OCI-LY7 (cell line): ENCODE measurements at regions of chr14 and their contacts with region 1.

Region 1: GRCh38 chr14:101843665-101844064 is 82.2 kb downstream of the PPP2R5C start:
- DNase-seq: peak; percentile 93
- H3K4me3 ChIP-seq: peak overlapping the region; percentile 38
- H3K27ac ChIP-seq: peak overlapping the region; percentile 63
- H3K4me1 ChIP-seq: peaks cover 89% of the 10 kb centered on the region
- CTCF ChIP-seq: peak; percentile 97

Region 2: DNA sequence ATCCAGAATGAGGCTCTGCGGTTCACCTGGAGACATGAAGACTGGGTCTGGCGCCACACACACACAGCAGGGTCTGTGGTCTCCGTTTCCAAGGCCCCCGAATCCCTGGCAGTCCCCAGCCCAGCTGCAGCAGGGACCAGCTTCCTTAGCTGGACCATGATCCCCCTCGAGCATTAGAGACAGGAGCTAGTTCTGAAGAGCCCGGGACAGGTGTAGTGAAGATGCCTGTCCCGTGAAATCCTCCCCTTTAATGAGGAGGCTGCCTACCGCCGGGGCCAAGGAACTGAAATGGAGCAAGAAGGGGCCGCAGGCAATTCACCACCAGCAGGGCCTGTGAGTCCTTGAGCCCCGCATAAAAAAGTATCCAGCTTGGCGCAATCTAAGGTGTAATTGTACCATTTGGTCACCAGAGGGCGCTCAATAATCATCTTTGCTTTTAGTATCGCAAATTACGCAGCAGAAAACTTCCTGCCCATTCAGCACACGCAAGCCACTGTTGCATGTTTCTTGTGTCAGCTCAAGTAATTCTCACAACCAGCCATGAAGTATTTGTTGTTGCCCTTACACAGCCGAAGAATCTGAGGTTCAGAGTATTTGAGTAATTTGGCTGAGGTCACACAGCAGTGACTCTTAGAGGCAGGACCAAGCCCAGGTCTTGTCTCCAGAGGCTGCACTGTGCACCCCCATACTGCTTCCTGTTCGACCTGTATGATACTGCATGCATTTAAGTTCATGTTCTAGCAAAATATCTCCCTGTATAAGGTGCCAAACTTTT is 136.4 kb before region 1 on chr14:
- CTCF ChIA-PET with region 1: no interaction called
- POLR2A ChIA-PET with region 1: no interaction called
- intact Hi-C with region 1: loop called (anchors 1 kb)
- DNase-seq: peak; percentile 83
- H3K4me3 ChIP-seq: no peak overlapping the region
- H3K27ac ChIP-seq: no peak overlapping the region
- H3K4me1 ChIP-seq: peaks cover 6% of the 10 kb centered on the region
- CTCF ChIP-seq: peak; percentile 94

Region 3: GRCh38 chr14:101809671-101810514 is 33.8 kb before region 1 on chr14:
- CTCF ChIA-PET with region 1: no interaction called
- POLR2A ChIA-PET with region 1: interaction called, 10 read pairs
- intact Hi-C with region 1: loop called (anchors 2 kb)
- DNase-seq: peak; percentile 96
- H3K4me3 ChIP-seq: peak overlapping the region; percentile 88
- H3K27ac ChIP-seq: peak overlapping the region; percentile 98
- H3K4me1 ChIP-seq: peaks cover 50% of the 10 kb centered on the region
- CTCF ChIP-seq: no peak

Region 4: GRCh38 chr14:101823511-101824120 is 20.0 kb before region 1 on chr14:
- CTCF ChIA-PET with region 1: interaction called, 5 read pairs
- POLR2A ChIA-PET with region 1: no interaction called
- intact Hi-C with region 1: loop called (anchors 2 kb)
- DNase-seq: peak; percentile 46
- H3K4me3 ChIP-seq: peak overlapping the region; percentile 71
- H3K27ac ChIP-seq: peak overlapping the region; percentile 93
- H3K4me1 ChIP-seq: peaks cover 89% of the 10 kb centered on the region
- CTCF ChIP-seq: no peak

Region 5: DNA sequence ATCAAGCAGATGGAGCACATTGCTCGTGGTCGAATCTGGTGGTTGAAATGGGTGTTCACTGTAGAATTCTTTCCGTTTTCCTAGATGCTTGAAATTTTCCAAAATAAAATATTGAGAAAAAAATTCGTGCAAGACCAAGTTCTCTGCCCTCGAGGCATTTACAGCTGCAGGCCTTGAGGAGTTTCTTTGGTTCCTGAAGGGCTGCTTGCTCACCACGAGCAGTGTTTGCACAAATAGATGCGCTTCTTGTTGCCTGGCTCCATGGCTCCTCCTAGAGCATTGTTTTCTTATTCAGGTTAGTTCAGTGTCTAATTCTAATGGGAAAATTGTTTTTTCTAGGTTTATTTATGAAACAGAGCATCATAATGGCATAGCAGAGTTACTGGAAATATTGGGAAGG is 46.2 kb after region 1 on chr14:
- CTCF ChIA-PET with region 1: no interaction called
- POLR2A ChIA-PET with region 1: no interaction called
- intact Hi-C with region 1: loop called (anchors 1 kb)
- DNase-seq: peak; percentile 39
- H3K4me3 ChIP-seq: no peak overlapping the region
- H3K27ac ChIP-seq: no peak overlapping the region
- H3K4me1 ChIP-seq: peaks cover 5% of the 10 kb centered on the region
- CTCF ChIP-seq: peak; percentile 56

Region 6: GRCh38 chr14:101964297-101965144 is 120.9 kb after region 1 on chr14 and contains the start of gene DYNC1H1:
- CTCF ChIA-PET with region 1: no interaction called
- POLR2A ChIA-PET with region 1: interaction called, 3 read pairs
- intact Hi-C with region 1: loop called (anchors 5 kb)
- DNase-seq: peak; percentile 95
- H3K4me3 ChIP-seq: peak within 1 kb of the TSS; percentile 97
- H3K27ac ChIP-seq: peak within 1 kb of the TSS; percentile 61
- H3K4me1 ChIP-seq: peaks cover 30% of the 10 kb centered on the region
- CTCF ChIP-seq: no peak
- total RNA-seq, gene DYNC1H1: 207 and 209 TPM in 2 replicates